ENCODE measurements at regions of chr6 and their contacts with region 1.

Region 1: DNA sequence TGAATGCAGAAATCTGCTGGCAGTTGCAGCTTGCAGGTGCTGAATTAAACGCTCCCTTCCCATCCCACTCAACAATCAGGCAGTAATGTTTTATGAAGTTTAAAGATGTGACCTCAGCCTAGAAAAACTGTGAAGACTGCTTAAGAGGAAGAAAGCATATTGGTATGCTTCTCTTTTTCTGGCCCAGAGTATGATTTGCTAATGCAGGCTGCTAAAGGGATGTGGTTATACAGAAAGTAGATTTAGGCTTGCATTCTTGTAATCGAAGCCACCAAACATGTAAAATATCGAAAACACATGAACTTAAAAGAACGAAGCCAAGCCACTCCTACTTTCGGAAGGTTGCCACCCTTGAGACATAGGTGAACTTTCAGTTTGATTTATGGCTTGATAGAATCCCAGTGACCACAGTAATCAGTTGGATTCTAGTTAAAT is 40.7 kb downstream of the MAP3K5 start:
- H3K4me3 Mint-ChIP-seq: peak overlapping the region; percentile 33
- H3K27ac Mint-ChIP-seq: peak overlapping the region; percentile 79
- H3K4me1 Mint-ChIP-seq: peaks cover 64% of the 10 kb centered on the region
- H3K27me3 Mint-ChIP-seq: no peaks in the 10 kb centered on the region

Region 2: GRCh38 chr6:136709427-136709826 is 42.1 kb before region 1 on chr6:
- intact Hi-C with region 1: no loop called
- H3K4me3 Mint-ChIP-seq: no peak overlapping the region
- H3K27ac Mint-ChIP-seq: no peak overlapping the region
- H3K4me1 Mint-ChIP-seq: peaks cover 48% of the 10 kb centered on the region
- H3K27me3 Mint-ChIP-seq: no peaks in the 10 kb centered on the region

Region 3: DNA sequence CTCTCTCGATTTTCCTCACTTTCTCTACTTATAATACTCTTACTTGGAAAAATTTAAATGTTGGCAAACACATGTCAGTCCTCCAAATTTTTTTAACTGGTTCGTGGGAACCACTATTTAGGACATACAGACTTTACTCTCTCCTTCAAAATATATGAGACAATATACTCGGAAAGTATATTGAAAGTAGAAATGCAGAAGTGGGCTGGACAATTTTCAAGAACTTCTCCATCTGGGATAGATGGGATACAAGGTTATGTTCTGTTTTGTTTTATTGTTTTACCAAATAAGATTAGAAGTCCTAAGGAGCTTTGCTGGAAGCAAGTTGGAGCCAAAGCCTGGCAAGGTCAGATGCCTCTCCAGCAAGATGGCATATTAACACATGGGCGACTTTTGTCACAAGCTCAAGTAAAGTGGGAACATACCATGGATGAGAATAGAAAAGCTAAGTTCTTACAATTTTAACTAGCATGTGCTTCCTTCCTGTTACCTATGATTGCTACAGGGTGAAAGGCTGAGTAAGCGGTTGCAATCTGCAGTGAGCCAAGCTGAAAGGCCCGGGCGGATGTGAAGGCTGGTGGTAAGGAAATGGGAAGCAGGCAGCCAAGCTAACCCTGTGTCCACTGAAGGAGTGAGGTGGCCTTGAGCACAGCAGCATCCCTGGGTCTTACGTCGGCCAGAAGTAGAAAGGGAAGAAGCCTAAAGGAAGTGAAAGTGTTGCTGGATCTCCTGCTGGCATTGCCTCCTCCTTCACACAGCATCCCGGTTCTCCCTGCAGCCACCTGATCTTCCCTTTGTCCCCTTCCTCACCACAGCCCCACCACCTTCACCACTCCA is 33.6 kb after region 1 on chr6:
- intact Hi-C with region 1: loop called (anchors 5 kb)
- H3K4me3 Mint-ChIP-seq: peak overlapping the region; percentile 85
- H3K27ac Mint-ChIP-seq: peak overlapping the region; percentile 85
- H3K4me1 Mint-ChIP-seq: peaks cover 74% of the 10 kb centered on the region
- H3K27me3 Mint-ChIP-seq: no peaks in the 10 kb centered on the region

Measured in dendritic cell treated with granulocyte-macrophage colony-stimulating factor and Interleukin-4, amounts not matched to agents 40 ng/mL and 50 ng/mL, for 4 days (primary cell).